Right cardiac atrium (tissue), 5 donors: ENCODE measurements at regions of chr2 and their contacts with region 1.

Region 1: DNA sequence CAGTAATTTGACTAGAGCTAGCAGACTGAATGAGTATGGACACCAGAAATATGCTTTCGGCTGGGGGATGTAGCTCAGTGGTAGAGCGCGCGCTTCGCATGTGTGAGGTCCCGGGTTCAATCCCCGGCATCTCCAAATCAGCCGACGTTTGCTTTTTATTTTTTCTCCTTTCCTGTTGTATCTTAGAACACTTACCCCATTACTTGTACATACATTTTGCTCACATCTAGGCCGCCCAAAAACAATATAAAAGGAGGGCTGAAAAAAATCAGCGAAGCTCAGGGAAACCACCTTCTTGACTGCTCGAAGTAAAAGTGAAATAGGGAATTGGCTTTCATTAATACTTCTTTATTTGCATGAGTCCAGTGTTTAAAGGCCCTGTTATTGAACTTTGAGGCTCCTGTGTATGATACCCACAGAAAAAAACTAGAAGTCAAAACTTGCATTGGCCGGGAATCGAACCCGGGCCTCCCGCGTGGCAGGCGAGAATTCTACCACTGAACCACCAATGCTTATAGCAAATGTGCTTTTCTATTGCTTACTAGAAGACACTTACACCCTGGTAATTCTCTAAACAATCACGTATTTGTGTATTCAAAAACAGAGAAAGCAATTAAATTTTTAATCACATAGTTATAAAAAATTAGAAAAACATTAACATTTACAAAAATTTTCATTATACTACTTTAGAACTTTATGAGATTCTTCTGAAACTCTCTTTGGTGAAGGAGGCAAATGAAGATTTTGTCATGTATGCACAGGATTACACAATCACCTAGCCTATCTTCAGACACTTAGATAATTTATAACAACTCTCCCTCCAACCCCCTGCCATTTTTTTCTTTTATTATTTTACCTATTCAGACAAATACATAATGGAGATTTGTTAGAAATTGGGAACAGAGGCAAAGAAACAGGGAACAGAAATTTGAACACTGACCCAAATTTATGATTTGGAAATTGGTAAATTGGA is 35.2 kb upstream of the GPD2 start:
- DNase-seq: peak; percentile 55 to 83 (median 82)
- ATAC-seq: peak; percentile 94 to 95
- H3K4me3 ChIP-seq: peak overlapping the region; percentile 97
- H3K27ac ChIP-seq: peak overlapping the region; percentile 82
- H3K4me1 ChIP-seq: no peaks in the 10 kb centered on the region
- H3K27me3 ChIP-seq: no peaks in the 10 kb centered on the region

Region 2: GRCh38 chr2:156253765-156254164 is 147.2 kb before region 1 on chr2:
- intact Hi-C with region 1: no loop called
- DNase-seq: no peak
- ATAC-seq: no peak
- H3K4me3 ChIP-seq: no peak overlapping the region
- H3K27ac ChIP-seq: no peak overlapping the region
- H3K4me1 ChIP-seq: no peaks in the 10 kb centered on the region
- H3K27me3 ChIP-seq: no peaks in the 10 kb centered on the region

Region 3: DNA sequence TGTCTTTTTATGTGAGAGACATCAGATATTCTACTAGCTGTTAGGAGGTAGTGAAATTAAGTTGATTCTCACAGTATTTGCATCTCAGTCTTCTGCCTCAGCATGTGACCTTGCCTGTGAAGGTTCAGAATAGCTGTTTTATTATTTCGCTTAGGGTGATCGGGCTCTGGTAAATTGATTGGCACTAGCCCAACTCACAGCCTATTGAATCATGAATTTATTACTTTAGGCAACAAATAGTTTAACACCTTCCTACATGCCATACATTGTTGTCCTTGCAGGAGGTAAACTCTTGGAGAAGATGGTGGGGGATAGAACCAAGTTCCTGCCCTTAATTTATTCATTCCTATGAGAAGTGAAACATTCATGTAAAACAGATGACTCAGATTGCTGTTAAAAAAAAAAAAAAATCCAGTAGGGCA is 137.1 kb after region 1 on chr2:
- intact Hi-C with region 1: no loop called
- DNase-seq: no peak
- ATAC-seq: no peak
- H3K4me3 ChIP-seq: no peak overlapping the region
- H3K27ac ChIP-seq: no peak overlapping the region
- H3K4me1 ChIP-seq: no peaks in the 10 kb centered on the region
- H3K27me3 ChIP-seq: no peaks in the 10 kb centered on the region

Region 4: GRCh38 chr2:156589381-156590079 is 188.5 kb after region 1 on chr2:
- intact Hi-C with region 1: loop called in 1 of 4 experiments (anchors 10 kb)
- DNase-seq: peak in 2 of 3 donors; percentile 18 to 43
- ATAC-seq: peak; percentile 54 to 80
- H3K4me3 ChIP-seq: no peak overlapping the region
- H3K27ac ChIP-seq: no peak overlapping the region
- H3K4me1 ChIP-seq: no peaks in the 10 kb centered on the region
- H3K27me3 ChIP-seq: no peaks in the 10 kb centered on the region